ENCODE measurements at regions of chr16 and their contacts with region 1.

Region 1: DNA sequence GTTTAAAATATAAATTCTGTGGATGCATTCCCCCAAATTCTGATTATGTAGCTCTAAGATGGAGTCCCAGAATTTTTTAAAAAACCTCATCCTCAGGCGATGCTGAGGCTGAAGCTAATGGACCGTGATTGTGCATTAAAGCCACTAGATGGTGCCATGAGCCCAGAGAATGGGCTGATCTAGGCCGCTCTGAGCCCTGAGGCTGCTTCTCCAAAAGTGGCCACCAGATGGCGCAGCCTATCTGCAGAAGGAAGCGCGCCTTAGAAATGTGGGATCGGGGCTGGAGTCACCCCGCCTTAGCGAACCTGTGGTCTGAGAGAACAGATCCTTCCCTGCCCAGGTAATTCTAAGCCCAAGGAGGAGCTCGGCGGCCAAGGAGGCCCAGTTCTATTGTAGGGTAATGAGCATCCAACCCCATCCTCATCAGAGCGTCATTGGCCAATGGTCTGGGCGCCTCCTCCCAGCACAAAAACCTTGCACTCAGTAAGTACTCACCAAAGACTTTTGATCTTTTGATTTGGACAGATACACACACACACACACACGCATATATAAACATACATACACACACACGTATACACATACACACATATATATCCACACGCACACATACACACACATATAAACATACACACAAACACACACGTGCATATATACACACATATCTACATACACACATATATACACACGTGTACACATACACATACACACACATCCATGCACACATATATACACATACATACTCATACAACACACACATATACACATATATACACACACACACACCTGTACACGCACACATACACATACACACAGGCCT is 13.7 kb upstream of the MMP2 start:
- DNase-seq: peak; percentile 93
- ATAC-seq: peak; percentile 92

Region 2: DNA sequence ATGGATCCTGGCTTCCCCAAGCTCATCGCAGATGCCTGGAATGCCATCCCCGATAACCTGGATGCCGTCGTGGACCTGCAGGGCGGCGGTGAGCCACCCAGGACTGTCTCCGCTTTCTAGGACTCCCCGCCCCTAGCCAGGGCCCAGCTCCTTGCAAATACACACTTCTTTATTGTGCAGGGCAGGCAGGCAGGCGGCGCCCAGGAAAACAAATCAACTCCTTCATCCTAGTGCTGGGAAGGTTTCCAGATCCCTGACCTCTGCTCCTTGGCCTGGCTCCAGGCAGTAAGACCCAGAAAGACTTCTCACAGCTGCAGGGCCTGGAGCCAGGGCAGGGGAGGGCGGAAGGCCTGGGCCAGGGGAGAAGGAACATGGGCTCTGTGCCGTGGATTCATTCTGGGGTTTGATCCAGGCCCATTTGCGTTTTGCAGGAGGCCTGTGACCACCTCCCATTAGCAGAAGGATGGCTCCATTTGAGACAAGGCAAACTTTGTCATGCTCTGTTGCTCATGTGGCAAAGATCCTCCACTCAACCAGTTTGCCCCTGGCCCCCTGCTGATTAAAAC is 37.6 kb after region 1 on chr16:
- intact Hi-C with region 1: loop called (anchors 5 kb)
- DNase-seq: peak; percentile 94
- ATAC-seq: peak; percentile 83

Region 3: DNA sequence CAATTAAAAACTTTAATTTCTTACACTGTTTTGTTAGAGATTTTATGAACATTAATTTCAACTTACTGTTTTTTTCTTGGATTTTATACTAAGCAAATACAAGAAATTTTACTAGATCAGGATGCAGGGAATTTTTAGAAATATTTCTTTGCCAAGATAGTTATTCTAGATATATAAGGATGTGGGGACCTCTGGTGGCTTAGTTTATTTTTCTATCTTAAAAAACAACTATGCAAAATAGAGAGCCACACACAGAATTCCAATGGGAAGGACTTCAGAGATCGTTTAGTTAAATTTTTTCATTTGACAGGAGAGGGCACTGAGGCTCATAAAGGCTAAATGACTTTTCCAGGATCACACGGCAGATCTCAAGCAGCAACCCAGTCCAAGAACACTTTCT is 78.2 kb after region 1 on chr16:
- intact Hi-C with region 1: loop called (anchors 1 kb)
- DNase-seq: no peak
- ATAC-seq: no peak

Region 4: GRCh38 chr16:55701442-55702319 is 236.4 kb after region 1 on chr16:
- intact Hi-C with region 1: loop called (anchors 1 kb)
- DNase-seq: peak; percentile 74
- ATAC-seq: peak; percentile 21

Region 5: DNA sequence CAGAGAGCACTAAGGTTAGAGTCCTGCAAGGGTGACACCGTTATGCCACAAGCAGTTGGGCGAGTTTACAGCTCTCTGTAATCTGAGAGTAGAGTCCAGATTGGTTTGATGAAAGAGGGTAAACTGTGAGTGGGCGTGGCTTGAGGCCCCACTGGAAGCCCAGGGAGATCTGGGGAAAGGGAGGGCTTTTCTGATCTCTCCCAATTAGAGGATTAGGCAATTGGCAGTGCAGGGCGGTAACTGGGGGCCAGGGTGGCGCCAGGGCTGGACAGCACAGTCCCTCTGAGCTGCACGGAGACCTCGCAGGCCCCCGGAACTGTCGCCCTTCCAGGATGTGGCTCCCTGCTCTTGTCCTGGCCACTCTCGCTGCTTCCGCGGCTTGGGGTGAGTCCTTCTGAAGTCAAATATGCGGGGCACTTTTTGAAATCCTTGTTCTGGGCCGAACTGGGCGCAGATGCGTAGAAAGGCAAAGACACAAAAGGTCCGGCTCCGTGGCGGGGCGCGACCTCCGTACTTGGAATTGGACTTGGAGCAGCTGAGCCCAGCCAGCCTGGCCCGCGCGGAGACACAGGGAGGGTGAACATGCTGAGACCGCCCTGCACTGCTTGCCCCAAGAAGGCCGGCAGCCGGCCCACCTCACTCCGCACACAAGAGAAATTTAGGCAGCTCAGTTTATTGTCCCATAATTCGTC is 295.2 kb after region 1 on chr16:
- intact Hi-C with region 1: loop called (anchors 5 kb)
- DNase-seq: peak; percentile 84
- ATAC-seq: peak; percentile 90

Region 6: DNA sequence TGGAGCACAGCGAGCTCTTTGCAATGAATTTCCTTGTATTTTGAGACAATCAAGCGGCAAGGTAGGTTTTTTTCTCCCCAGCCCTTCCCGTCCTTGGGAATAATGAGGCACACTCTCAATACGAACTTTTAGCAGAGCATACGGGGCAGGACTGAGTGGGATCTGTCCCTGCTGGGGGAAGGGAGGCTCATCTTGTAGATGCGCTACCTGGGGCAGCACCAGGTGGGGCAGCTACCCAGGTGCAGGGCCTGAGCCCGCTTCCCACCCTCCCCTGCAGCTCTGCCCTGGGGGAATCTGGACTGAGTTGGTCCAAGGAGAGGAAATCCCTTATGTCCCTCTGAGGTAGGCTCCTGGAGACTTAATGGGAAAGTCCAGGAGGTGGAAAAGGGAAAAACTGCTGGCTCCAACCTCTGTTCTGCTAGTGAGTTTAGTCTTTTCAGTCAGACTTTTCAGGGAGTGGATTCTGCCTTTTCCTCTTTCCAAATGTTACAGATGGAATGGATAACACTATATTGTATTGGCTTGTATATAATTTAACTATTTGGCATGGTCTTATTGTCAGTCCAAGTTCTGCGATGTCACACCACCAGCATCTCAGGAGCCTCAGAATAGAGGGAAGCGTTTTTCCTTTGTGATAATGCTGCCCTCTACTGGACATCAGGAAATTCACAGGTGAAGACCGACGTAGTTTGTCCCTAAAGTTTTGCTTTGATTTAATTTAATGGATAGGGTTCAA is 377.2 kb after region 1 on chr16:
- intact Hi-C with region 1: loop called (anchors 5 kb)
- DNase-seq: no peak
- ATAC-seq: no peak

Measured in Right ventricle myocardium inferior (tissue), 1 donor.